GM10248 (cell line): ENCODE measurements at regions of chr17 and their contacts with region 1.

Region 1: DNA sequence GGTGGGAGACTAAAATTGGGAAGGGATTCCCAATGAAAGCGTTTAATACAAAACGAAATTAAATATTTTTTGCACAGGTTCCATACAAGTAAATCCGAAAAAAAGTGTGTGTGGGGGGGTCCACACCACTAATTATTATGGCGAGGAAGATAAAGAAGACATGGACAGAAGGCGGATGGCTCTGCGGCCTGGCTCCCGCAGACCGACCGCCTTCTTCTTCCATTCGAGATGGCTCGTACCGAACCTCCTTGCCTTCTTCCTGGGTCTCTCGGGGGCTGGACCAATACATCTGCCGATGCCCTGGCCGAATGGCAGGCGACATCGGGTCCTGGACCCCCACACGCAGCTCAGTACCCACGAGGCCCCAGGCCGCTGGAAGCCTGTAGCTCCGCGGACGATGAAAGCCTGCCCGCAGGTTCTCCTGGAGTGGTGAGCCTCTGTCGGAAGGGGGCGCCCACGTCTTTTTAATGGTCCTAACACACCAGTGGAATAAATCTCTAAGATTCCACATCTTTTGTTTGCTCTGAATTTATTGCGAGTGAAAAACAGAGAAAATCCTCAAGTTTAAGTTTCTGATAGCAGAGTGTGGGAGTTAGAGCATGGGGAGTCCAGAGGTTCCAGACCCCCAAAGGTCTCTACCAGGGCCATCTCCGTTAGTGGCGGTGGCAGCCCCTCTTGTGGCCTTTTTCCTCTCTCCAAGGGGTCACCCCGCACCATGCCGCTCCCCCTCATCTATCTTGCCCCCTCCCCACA is 1.4 kb downstream of the PRAC2 start:
- DNase-seq: peak; percentile 71
- CTCF ChIP-seq: peak; percentile 82

Region 2: DNA sequence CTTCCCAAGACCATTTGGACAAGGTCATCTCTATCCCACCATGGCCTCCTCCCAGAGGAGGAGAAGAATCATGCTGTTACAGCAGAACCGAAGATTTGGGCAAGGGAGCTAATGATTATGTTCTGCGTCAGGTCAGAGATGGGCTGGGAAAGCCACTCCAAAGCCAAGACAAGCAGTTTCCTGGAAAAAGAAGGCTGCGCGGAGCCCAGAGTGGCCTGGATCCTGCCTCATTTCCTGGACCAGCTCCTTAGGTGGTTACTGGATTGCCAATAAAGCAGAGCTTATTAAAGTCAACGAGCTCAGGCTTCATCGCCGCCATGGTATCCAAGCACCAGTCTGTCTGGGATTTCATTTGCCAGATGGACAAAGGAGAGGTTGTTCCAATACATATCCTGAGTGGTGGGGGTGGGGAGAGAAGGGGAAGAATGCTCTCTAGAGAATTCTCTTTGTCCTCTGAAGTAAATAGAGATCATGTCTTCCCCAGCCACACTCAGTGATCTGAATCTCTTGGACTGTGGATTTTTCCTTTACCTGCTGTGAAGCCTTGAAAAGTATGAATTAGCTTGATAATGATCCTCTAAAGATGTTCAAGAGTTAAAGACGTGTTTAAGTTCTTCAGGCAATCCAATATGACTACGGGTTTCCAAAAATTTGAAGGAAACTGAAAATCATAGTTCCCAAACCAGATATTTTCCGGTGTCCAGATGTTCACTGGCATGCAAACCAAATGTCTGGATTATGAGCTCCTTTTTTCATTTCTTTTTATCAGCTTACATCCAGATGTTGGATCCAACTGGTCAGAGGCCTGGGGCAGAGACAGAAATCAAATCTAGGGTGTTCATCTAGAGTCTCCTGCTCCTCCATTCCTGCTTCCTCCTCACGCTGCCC is 19.8 kb before region 1 on chr17:
- CTCF ChIA-PET with region 1: interaction called, 34 read pairs
- POLR2A ChIA-PET with region 1: no interaction called
- DNase-seq: no peak
- CTCF ChIP-seq: no peak

Region 3: DNA sequence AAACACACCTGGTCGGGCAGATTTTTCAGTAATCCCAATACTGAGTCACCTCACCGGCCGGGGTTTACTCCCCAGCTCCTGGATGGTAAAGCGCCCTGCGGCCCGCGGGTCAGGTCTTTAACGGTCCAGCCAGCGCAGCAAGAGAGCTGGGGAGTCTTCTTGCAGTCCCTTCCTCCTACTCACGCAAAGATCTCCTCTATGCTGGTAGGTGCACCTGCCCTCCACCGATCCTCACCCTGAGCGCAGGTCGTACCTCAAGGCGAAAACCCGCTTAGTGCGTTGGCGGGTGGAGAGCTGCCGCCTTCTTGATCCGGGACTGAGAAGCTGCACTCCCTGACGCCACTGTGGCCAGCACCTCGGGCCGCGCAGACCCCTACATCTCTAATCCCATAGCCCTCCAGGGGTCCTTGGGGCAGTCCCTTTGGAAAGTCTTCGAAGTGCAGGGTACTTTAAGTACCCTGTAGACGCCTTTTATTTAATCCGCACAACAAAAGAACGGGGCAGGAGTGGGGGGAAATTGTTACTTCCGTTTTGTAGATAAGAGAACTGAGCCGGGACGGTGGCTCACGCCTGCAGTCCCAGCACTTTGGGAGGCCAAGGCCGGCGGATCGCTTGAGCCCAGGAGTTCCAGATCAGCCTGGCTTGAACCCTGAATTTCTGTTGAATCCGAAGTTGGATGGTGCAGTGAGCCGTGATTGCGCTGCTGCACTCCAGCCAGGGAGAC is 14.5 kb after region 1 on chr17:
- CTCF ChIA-PET with region 1: interaction called, 47 read pairs
- POLR2A ChIA-PET with region 1: no interaction called
- DNase-seq: peak; percentile 26
- CTCF ChIP-seq: no peak

Region 4: DNA sequence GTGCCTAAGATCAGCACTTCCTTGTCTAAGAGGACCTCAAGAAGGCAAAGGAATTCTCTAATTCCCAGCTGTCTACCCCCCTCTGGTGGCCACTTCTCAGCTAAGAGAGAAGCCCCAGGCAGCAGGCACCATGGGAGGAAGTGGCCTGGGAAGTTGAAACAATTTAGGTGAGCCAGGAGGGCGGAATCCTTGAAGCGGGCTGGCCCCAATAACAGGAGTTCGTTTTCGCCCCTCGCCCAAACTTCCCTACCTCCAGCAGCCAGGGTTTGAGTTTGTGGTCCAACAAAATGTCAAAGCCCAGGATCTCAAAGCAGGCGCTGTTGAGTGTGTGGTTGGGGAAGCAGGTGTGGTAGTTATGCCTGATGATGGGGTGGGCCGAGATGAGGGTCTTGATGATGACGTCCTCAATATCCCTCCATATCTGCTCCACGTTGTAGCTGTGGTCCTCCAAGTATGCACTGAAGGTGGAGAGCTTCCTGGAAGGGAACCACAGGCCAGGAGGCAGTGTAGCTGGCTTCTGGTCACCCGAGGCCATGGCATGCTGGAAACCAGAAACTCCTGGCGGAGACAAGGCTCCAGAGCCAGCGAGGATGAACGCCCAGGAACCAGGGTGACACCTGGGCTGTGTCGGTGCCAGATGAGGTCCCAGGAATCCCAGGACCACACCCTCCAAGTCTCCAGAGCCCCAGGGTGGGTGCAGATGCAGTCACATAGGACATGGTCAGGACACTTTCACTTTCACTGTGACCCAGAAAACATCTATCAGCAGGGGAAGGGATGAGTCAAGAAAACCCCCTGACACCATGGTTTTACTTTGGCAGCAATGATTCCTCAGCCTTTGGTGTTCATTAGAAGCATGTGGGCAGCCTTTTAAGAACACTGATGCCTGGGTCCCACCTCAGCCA is 67.0 kb after region 1 on chr17:
- CTCF ChIA-PET with region 1: interaction called, 54 read pairs
- POLR2A ChIA-PET with region 1: no interaction called
- DNase-seq: peak; percentile 70
- CTCF ChIP-seq: peak; percentile 62

Region 5: GRCh38 chr17:48841395-48841831 is 117.0 kb after region 1 on chr17:
- CTCF ChIA-PET with region 1: interaction called, 10 read pairs
- POLR2A ChIA-PET with region 1: no interaction called
- DNase-seq: peak; percentile 72
- CTCF ChIP-seq: no peak